ENCODE measurements at regions of chr5 and their contacts with region 1.

Region 1: DNA sequence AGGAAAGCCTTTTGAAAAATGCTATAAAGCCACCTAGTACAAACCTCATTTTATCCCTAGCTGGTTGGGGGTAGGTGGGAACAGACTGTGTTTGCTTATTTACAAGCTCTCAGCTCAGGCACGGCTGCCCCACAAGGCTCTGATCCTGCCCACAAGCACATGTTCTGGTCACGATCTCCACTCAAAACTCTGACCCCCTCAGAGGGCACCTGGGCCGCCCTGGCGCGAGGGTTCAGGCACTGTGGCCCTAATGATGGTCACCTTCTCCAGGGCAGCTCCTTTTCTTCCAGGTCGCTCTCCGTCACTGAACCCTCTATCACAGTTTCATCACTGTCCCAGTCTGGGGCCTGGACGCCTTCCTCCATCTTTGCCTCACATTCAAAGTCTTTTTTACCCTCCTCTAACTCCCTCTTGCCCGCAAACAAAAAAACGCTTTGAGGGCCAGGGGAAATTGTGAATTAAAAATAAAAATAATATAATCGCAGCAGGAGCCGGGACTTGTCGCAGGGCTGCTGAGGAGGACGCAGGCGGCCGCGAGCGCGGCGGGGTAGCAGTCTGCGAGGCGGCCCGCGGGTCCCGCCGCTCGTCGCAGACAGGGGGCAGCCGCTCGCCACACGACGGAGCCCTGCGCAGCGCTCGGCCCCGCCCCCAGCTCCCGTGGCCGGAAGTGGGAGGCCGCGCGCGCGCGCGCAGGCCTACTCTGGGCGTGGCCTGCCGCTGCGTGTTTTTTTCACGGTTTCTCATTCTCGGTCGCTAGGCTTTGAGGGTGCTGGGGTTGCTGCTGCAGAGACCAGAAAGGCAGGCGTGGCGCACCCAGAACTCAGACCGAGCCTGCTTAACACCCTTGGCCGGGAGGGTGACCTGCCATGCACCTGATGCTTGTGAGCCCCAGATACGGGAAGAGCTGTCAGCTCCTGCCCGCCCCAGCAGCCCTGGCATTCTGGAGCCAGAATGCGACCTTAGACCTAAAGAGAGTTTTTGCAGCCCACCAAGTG is at the start of gene ANKRD31:
- DNase-seq: peak; percentile 90
- H3K4me3 ChIP-seq: peak within 1 kb of the TSS; percentile 53 to 71 (median 60)
- H3K27ac ChIP-seq: peak within 1 kb of the TSS; percentile 71 to 79 (median 78)
- H3K4me1 ChIP-seq: peaks cover 0 to 9% (median 3%) of the 10 kb centered on the region in 4 donors
- H3K27me3 ChIP-seq: no peaks in the 10 kb centered on the region
- CTCF ChIP-seq: peak in 3 of 4 experiments; percentile 41 to 92 (median 50)
- EP300 ChIP-seq: no peak
- POLR2A ChIP-seq: peak in 1 of 2 donors; percentile 12
- total RNA-seq, gene ANKRD31: under 0.01 to 0.33 (median 0.28) TPM in 3 of 4 donors, not detected in the other

Region 2: DNA sequence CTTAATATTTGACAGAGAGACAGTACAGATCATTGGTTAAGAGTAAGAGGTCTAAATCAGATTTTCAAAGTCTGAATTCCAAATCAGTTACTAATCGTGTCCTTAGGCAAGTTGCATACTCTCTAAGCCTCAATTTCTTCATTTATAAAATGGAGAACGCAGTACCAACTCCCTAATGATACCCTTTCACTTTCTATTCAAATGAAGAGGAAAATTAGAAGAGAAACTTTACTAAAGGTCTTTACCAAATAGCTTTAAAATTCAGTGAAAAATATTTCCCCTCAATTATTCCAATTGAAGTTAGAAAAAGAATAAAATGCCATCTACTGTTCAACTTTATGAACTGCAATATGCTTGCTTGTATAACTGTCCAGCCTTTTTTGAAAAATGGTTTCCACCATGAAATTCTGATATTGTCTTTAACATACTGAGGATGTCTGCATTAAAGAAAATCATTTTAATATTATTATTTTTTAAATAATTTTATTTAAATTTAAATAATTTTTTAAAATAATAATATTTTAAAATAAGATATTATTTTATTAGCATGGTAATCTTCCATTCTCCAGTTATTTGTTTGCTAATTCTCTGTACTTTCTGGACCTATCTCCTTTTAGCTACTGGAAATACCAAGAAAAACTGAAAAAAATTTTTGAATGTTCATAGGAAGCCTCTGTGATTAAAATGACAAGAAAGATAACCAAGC is 444.7 kb after region 1 on chr5:
- intact Hi-C with region 1: loop called (anchors 1 kb)
- DNase-seq: no peak
- H3K4me3 ChIP-seq: no peak overlapping the region
- H3K27ac ChIP-seq: peak overlapping the region in 3 of 4 donors; percentile 20 to 45 (median 23)
- H3K4me1 ChIP-seq: peaks cover 0 to 19% (median 6%) of the 10 kb centered on the region in 4 donors
- H3K27me3 ChIP-seq: no peaks in the 10 kb centered on the region
- CTCF ChIP-seq: peak; percentile 13 to 75 (median 59)
- EP300 ChIP-seq: no peak
- POLR2A ChIP-seq: no peak

Measured in sigmoid colon (tissue), 7 donors.